ENCODE measurements at regions of chr1 and their contacts with region 1.

Region 1: DNA sequence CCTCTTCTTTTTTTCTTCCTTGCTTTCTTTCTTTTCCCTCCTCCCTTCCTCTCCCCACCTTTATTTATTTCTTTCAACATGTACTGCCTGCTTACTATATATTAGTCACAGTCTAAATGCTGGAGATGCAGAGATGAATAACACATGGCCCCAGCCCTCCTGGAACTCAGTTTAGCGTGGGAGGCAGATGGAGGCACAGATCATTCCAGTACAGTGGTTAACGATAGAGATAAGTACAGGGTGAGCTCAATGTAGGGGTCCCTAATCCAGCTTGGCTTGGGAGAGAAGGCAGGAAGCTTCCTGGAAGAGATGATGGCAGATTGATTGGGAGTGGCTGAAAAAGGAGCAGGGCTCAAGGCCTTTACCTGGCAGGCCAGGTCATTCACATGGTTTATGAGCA is 55.6 kb upstream of the PPP2R5A start:
- DNase-seq: no peak
- H3K4me3 ChIP-seq: no peak overlapping the region
- H3K27ac ChIP-seq: no peak overlapping the region
- H3K4me1 ChIP-seq: peaks cover 0 to 2% of the 10 kb centered on the region in 2 donors
- H3K27me3 ChIP-seq: no peaks in the 10 kb centered on the region
- CTCF ChIP-seq: no peak
- POLR2A ChIP-seq: no peak

Region 2: GRCh38 chr1:212179394-212180076 is 50.1 kb before region 1 on chr1:
- intact Hi-C with region 1: no loop called
- DNase-seq: no peak
- H3K4me3 ChIP-seq: no peak overlapping the region
- H3K27ac ChIP-seq: no peak overlapping the region
- H3K4me1 ChIP-seq: no peaks in the 10 kb centered on the region
- H3K27me3 ChIP-seq: no peaks in the 10 kb centered on the region
- CTCF ChIP-seq: no peak
- POLR2A ChIP-seq: no peak

Region 3: GRCh38 chr1:212291505-212292134 is 62.0 kb after region 1 on chr1:
- intact Hi-C with region 1: loop called (anchors 2 kb)
- DNase-seq: no peak
- H3K4me3 ChIP-seq: no peak overlapping the region
- H3K27ac ChIP-seq: peak overlapping the region in 1 of 2 donors; percentile 27
- H3K4me1 ChIP-seq: peaks cover 3 to 11% of the 10 kb centered on the region in 2 donors
- H3K27me3 ChIP-seq: no peaks in the 10 kb centered on the region
- CTCF ChIP-seq: peak in 2 of 3 donors; percentile 43 to 54
- POLR2A ChIP-seq: no peak

Measured in breast epithelium (tissue), 4 donors.